ENCODE measurements at regions of chr3 and their contacts with region 1.

Region 1: DNA sequence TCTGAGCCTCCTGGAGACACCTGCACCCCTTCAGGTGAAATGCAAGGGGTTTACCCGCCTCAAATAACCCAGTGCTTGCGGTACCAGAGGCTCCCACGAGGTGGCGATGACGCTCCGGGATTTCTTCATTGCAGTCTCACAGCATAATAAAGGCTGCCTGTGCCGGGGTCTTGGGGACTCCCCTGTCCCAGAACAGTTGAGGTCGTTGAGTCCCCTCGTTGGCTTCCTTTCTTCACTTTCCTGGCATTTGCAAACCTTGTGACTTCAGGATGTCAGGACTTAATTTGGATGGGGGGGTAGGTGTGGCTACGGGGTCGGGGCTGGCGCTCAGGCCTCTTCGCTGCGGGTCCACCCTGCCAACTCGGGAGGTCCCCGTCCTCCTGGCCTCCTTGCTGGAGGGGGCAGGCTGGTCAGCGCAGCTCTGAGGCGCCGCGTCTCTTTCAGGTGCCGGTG is 1.3 kb downstream of the GNAT1 start:
- DNase-seq: peak; percentile 67 to 85 (median 77)
- H3K4me3 ChIP-seq: no peak overlapping the region
- H3K27ac ChIP-seq: no peak overlapping the region
- H3K4me1 ChIP-seq: peaks cover 0 to 19% (median 15%) of the 10 kb centered on the region in 4 experiments
- H3K27me3 ChIP-seq: peaks cover 0 to 38% (median 23%) of the 10 kb centered on the region in 5 experiments

Region 2: GRCh38 chr3:50154450-50154839 is 38.3 kb before region 1 on chr3:
- CTCF ChIA-PET with region 1: interaction called, 10 read pairs
- POLR2A ChIA-PET with region 1: no interaction called
- DNase-seq: no peak
- H3K4me3 ChIP-seq: peak overlapping the region; percentile 24 to 76 (median 59)
- H3K27ac ChIP-seq: no peak overlapping the region
- H3K4me1 ChIP-seq: peaks cover 0 to 29% (median 22%) of the 10 kb centered on the region in 4 experiments
- H3K27me3 ChIP-seq: peaks cover 0 to 45% (median 24%) of the 10 kb centered on the region in 5 experiments

Region 3: GRCh38 chr3:50179710-50180109 is 13.0 kb before region 1 on chr3:
- CTCF ChIA-PET with region 1: interaction called, 13 read pairs
- POLR2A ChIA-PET with region 1: no interaction called
- DNase-seq: no peak
- H3K4me3 ChIP-seq: no peak overlapping the region
- H3K27ac ChIP-seq: no peak overlapping the region
- H3K4me1 ChIP-seq: no peaks in the 10 kb centered on the region
- H3K27me3 ChIP-seq: peaks cover 0 to 2% (median 0%) of the 10 kb centered on the region in 5 experiments

Region 4: GRCh38 chr3:50221411-50222168 is 28.9 kb after region 1 on chr3:
- CTCF ChIA-PET with region 1: interaction called, 1,875 read pairs
- POLR2A ChIA-PET with region 1: interaction called, 7 read pairs
- DNase-seq: no peak
- H3K4me3 ChIP-seq: no peak overlapping the region
- H3K27ac ChIP-seq: no peak overlapping the region
- H3K4me1 ChIP-seq: peaks cover 0 to 20% (median 15%) of the 10 kb centered on the region in 4 experiments
- H3K27me3 ChIP-seq: peaks cover 0 to 4% (median 0%) of the 10 kb centered on the region in 5 experiments

Region 5: DNA sequence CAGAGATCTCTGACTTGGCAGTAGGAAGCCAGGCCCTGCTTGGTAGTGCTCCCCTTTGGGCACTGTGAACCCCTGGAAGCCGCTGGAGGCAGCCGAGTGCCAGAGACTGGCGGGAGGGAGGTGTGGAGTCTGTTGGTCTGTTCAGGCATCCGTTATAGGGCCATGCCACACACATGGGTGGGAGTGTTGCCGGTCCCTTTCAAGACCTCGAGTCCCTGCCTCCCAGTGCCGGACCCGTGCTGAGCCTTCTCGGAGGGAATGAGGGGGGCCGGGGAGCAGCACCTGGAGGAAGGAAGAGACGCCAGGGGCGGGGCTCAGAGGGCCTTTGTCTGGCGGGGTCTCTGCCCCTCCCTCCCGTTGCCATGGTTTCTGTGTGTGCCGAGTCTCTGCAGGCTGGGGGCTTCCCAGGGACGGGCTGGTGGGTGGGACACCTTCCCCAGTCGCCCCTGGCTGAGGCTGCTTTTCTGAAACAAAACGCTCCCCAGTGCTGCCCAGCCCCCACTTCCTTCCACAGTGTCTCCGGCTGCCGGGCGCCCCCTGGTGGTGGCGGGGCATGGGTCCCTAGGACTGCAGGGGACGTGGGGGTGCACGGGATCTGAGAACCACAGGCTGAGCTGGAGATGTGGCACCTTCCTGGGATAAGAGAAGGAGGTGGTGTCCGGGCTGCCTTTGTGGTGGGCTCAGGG is 53.3 kb after region 1 on chr3:
- CTCF ChIA-PET with region 1: interaction called, 1,875 read pairs
- POLR2A ChIA-PET with region 1: no interaction called
- DNase-seq: peak; percentile 90 to 96 (median 96)
- H3K4me3 ChIP-seq: peak overlapping the region in 6 of 7 experiments; percentile 43 to 72 (median 60)
- H3K27ac ChIP-seq: peak overlapping the region; percentile 52 to 83
- H3K4me1 ChIP-seq: peaks cover 9 to 91% (median 81%) of the 10 kb centered on the region in 4 experiments
- H3K27me3 ChIP-seq: no peaks in the 10 kb centered on the region

Region 6: DNA sequence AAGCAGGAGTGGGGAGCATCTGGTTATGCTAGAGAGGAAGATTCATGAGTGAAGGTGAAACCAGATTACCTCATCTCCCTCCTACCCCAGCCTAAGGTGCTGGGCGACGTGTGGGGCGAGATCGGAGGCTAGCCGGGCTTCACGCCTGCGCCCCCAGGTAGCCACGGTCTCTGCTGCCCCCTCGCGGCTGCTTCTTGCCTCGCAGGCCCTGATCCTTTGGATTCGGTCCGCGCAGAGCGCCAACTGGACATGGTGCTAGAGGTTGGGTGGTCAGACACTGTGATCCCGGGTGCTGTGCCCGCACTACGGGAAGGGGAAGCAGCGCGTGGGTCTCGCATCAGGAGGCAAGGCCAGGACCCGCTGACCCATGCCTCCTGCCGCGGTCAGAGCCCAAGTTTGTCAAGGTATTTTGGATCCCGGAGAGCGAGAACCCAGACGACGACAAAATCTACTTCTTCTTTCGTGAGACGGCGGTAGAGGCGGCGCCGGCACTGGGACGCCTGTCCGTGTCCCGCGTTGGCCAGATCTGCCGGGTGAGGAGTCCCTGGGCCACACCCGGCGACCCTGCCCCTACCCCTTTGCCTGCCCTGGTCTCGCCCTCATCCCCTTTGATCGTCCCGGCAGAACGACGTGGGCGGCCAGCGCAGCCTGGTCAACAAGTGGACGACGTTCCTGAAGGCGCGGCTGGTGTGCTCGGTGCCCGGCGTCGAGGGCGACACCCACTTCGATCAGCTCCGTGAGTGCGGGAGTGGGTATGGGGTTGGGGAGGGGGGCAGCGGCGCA is 80.4 kb after region 1 on chr3:
- CTCF ChIA-PET with region 1: interaction called, 1,875 read pairs
- POLR2A ChIA-PET with region 1: no interaction called
- DNase-seq: peak; percentile 65 to 82 (median 80)
- H3K4me3 ChIP-seq: peak overlapping the region in 5 of 7 experiments; percentile 35 to 73 (median 44)
- H3K27ac ChIP-seq: no peak overlapping the region
- H3K4me1 ChIP-seq: peaks cover 0 to 33% (median 25%) of the 10 kb centered on the region in 4 experiments
- H3K27me3 ChIP-seq: peaks cover 0 to 63% (median 22%) of the 10 kb centered on the region in 5 experiments

Region 7: GRCh38 chr3:50321336-50322114 is 128.8 kb after region 1 on chr3:
- CTCF ChIA-PET with region 1: interaction called, 10 read pairs
- POLR2A ChIA-PET with region 1: no interaction called
- DNase-seq: peak; percentile 88 to 92 (median 90)
- H3K4me3 ChIP-seq: peak overlapping the region; percentile 69 to 88 (median 82)
- H3K27ac ChIP-seq: peak overlapping the region; percentile 98 to 99
- H3K4me1 ChIP-seq: peaks cover 2 to 80% (median 58%) of the 10 kb centered on the region in 4 experiments
- H3K27me3 ChIP-seq: no peaks in the 10 kb centered on the region

Measured in common myeloid progenitor, CD34-positive (primary cell).